ENCODE measurements at regions of chr22 and their contacts with region 1.

Region 1: GRCh38 chr22:26172389-26172990 is 3.2 kb downstream of the SEZ6L start:
- DNase-seq: peak; percentile 22 to 35
- ATAC-seq: peak; percentile 78 to 88; a peak in 5 of 6 replicates
- H3K4me3 ChIP-seq: no peak overlapping the region
- H3K27ac ChIP-seq: no peak overlapping the region
- H3K4me1 ChIP-seq: no peaks in the 10 kb centered on the region
- CTCF ChIP-seq: peak; percentile 40
- EP300 ChIP-seq: no peak
- POLR2A ChIP-seq: no peak
- RAD21 ChIP-seq: peak in 1 of 2 experiments; percentile 37; a peak in 2 of 5 replicates

Region 2: GRCh38 chr22:26159886-26160285 is 12.6 kb before region 1 on chr22:
- CTCF ChIA-PET with region 1: interaction called, 14 read pairs
- POLR2A ChIA-PET with region 1: no interaction called
- DNase-seq: no peak
- ATAC-seq: no peak
- H3K4me3 ChIP-seq: no peak overlapping the region
- H3K27ac ChIP-seq: no peak overlapping the region
- H3K4me1 ChIP-seq: no peaks in the 10 kb centered on the region
- CTCF ChIP-seq: no peak
- EP300 ChIP-seq: no peak
- POLR2A ChIP-seq: no peak
- RAD21 ChIP-seq: no peak

Region 3: GRCh38 chr22:26182723-26183122 is 10.2 kb after region 1 on chr22:
- CTCF ChIA-PET with region 1: interaction called, 20 read pairs
- POLR2A ChIA-PET with region 1: no interaction called
- DNase-seq: no peak
- ATAC-seq: no peak
- H3K4me3 ChIP-seq: no peak overlapping the region
- H3K27ac ChIP-seq: no peak overlapping the region
- H3K4me1 ChIP-seq: no peaks in the 10 kb centered on the region
- CTCF ChIP-seq: no peak
- EP300 ChIP-seq: no peak
- POLR2A ChIP-seq: no peak
- RAD21 ChIP-seq: no peak

Measured in A549 (cell line).